SK-N-SH (cell line): ENCODE measurements at regions of chr17 and their contacts with region 1.

Region 1: DNA sequence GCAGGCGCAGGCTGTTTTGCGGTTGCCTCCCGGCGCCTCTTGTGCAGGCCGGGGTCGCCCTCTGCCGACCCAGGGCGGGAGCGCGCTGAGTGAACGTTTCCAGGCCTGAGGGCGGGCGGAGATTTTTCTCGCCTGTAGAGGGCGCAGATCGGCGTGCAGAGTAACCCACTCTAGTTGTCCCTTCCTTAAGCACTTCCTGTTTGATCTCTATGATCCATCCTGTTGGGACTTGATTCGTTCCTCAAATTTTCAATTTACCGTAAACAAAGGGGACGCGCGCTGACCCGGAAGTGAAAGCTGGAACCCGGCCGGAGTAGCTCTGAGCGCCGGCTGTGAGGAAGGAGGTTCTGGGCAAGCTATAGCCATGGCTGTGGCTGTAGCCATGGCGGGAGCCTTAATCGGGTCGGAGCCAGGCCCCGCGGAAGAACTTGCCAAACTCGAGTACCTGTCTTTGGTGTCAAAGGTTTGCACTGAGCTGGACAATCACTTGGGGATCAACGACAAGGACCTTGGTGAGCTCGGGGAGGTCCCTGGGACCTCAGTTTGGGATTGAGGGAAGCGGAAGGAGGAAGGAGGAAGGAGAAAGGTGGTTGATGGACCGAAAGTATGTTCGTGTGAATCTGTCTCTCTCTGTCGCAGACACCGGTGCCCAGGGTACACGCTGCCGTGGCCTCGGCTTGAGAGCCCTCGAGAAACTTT is at the start of gene DHX8:
- DNase-seq: peak; percentile 90
- H3K4me3 ChIP-seq: peak within 1 kb of the TSS; percentile 81 to 97
- H3K27ac ChIP-seq: peak within 1 kb of the TSS; percentile 81 to 87
- H3K4me1 ChIP-seq: peaks cover 3 to 8% of the 10 kb centered on the region in 2 experiments; a peak in 2 of 4 replicates
- H3K27me3 ChIP-seq: no peaks in the 10 kb centered on the region
- CTCF ChIP-seq: peak; percentile 100
- EP300 ChIP-seq: peak; percentile 8 to 72; a peak in 2 of 4 replicates
- RAD21 ChIP-seq: peak; percentile 100
- polyA plus RNA-seq, gene DHX8: 31.3 and 35.1 TPM in 2 replicates

Region 2: DNA sequence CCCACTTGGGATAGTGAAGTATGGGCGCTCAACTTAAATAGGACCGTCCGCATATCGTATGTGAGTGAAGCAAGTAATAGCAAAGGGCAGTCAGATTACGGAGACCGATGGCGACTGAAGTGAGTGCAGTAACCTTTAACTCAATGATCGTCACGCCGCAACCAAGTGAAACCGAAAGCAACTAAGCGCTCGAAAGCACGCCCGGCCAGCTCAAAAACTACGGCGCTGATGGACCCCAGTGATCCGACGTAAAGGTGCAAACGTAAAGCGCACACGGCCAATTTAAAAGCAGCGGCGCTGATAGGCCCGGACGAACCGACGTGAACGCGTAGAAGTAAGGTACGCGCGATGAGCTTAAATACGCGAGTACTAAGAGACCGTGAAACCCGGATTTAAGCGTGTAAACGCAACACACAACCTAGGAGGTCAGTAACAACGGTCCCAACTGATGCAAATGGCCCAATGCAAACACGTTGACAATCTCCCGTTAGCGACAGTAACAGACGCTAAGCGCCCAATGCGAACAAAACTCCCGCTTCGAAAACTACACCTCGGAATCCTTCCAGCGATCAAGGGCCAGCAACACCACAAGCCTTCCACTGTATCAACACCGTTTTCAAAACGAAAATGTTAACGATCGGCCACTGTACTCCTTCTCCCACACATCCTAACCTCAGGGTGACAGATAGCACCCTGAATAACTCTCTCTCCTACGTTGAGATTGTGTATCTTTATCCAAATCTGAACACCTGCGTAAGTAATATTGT is 122.9 kb before region 1 on chr17:
- CTCF ChIA-PET with region 1: interaction called, 11 read pairs
- POLR2A ChIA-PET with region 1: interaction called, 30 read pairs
- DNase-seq: peak; percentile 78
- H3K4me3 ChIP-seq: peak overlapping the region; percentile 56 to 59
- H3K27ac ChIP-seq: peak overlapping the region; percentile 91 to 98
- H3K4me1 ChIP-seq: peaks cover 9 to 16% of the 10 kb centered on the region in 2 experiments; a peak in 3 of 4 replicates
- H3K27me3 ChIP-seq: no peaks in the 10 kb centered on the region
- CTCF ChIP-seq: no peak
- EP300 ChIP-seq: peak; percentile 13 to 58; a peak in 2 of 4 replicates
- RAD21 ChIP-seq: no peak

Region 3: DNA sequence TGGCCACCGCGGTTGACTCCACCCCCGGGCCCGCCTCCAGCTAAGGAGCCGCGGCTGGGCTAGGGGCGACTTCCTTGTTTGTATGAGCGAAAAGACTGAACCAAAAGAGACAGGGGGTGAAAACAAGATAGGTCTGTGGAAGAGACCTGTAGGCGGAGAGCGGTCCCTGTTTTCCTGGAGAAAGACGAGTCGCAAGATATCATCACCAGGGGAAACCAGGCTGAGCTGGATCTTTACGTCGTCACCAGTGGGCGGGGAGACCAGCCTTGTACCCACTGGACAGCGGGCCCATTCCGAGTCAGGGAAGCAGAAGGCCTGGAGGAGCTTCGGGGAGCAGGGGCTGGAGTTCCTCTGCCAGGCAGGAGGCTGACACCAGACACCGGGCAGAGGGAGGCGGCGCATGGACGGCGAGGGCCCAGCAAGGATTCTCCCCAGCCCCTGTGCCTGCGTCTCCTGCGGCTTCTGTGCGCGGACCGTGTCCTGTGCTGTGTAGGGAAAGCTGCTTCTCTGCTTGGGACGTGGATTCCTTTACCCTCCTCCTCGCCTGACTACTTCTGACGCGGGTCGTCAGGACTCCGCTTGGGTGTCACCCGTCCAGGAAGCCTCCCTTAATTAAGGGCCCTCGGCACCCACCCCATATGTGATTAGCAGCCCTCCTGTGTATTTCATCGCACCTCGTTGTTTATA is 95.3 kb before region 1 on chr17:
- CTCF ChIA-PET with region 1: interaction called, 430 read pairs
- POLR2A ChIA-PET with region 1: interaction called, 26 read pairs
- DNase-seq: peak; percentile 84
- H3K4me3 ChIP-seq: peak overlapping the region; percentile 58 to 77
- H3K27ac ChIP-seq: peak overlapping the region; percentile 91 to 99
- H3K4me1 ChIP-seq: no peaks in the 10 kb centered on the region; a peak in 1 of 4 replicates
- H3K27me3 ChIP-seq: no peaks in the 10 kb centered on the region
- CTCF ChIP-seq: no peak
- EP300 ChIP-seq: no peak
- RAD21 ChIP-seq: no peak

Region 4: GRCh38 chr17:43412166-43412565 is 71.7 kb before region 1 on chr17:
- CTCF ChIA-PET with region 1: interaction called, 16 read pairs
- POLR2A ChIA-PET with region 1: no interaction called
- DNase-seq: no peak
- H3K4me3 ChIP-seq: no peak overlapping the region
- H3K27ac ChIP-seq: no peak overlapping the region
- H3K4me1 ChIP-seq: peaks cover 7 to 11% of the 10 kb centered on the region in 2 experiments
- H3K27me3 ChIP-seq: no peaks in the 10 kb centered on the region
- CTCF ChIP-seq: no peak
- EP300 ChIP-seq: no peak
- RAD21 ChIP-seq: no peak

Region 5: GRCh38 chr17:43442711-43443110 is 41.1 kb before region 1 on chr17:
- CTCF ChIA-PET with region 1: interaction called, 12 read pairs
- POLR2A ChIA-PET with region 1: no interaction called
- DNase-seq: no peak
- H3K4me3 ChIP-seq: no peak overlapping the region
- H3K27ac ChIP-seq: peak overlapping the region in 1 of 2 experiments; percentile 34; a peak in 1 of 4 replicates
- H3K4me1 ChIP-seq: no peaks in the 10 kb centered on the region
- H3K27me3 ChIP-seq: no peaks in the 10 kb centered on the region
- CTCF ChIP-seq: no peak
- EP300 ChIP-seq: no peak
- RAD21 ChIP-seq: no peak

Region 6: DNA sequence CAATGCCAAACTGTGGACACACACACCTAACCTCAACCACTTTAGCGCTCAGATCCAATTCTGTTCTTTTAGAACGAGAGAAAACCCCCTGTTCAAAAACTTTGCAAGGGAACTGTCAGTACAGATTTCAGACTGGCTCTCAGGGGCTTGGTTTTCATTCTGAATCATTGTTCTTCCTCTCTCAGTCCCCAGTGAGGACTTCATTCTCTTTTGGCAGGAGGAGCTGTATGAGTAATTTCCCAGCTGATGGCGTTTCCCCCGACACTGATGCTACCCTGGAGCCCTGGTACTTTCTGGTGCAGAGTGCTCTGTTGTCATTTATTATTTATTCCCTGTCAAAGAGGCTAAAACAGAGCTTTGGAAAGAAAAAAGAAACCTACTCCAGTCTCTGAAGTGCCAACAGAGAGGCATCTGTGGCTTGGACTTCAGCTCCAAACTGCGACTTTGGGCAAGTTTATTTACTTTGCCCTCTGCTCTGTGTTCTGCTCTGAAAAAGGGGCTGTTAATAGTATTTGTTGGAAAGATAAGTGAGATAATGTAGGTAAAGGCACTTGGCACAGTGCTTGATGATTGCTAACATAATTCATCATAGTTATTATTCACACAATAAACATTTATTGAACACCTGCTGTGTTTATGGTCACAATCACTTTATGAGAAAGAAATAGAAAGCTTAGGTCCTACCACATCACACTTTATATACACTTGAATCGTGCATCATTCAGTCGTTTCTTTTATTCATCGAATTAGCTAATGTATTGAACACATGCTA is 34.0 kb after region 1 on chr17:
- CTCF ChIA-PET with region 1: interaction called, 24 read pairs
- POLR2A ChIA-PET with region 1: no interaction called
- DNase-seq: no peak
- H3K4me3 ChIP-seq: no peak overlapping the region
- H3K27ac ChIP-seq: peak overlapping the region in 1 of 2 experiments; percentile 84; a peak in 2 of 4 replicates
- H3K4me1 ChIP-seq: peaks cover 0 to 21% of the 10 kb centered on the region in 2 experiments; a peak in 2 of 4 replicates
- H3K27me3 ChIP-seq: no peaks in the 10 kb centered on the region
- CTCF ChIP-seq: no peak
- EP300 ChIP-seq: no peak
- RAD21 ChIP-seq: no peak